ENCODE measurements at regions of chr3 and their contacts with region 1.

Region 1: GRCh38 chr3:99833617-99834205 is 16.0 kb downstream of the CMSS1 start:
- DNase-seq: no peak
- H3K4me3 ChIP-seq: no peak overlapping the region
- H3K27ac ChIP-seq: peak overlapping the region in 1 of 2 donors; percentile 41
- H3K4me1 ChIP-seq: peaks cover 0 to 7% of the 10 kb centered on the region in 2 donors
- H3K27me3 ChIP-seq: no peaks in the 10 kb centered on the region
- CTCF ChIP-seq: no peak
- POLR2A ChIP-seq: no peak

Region 2: DNA sequence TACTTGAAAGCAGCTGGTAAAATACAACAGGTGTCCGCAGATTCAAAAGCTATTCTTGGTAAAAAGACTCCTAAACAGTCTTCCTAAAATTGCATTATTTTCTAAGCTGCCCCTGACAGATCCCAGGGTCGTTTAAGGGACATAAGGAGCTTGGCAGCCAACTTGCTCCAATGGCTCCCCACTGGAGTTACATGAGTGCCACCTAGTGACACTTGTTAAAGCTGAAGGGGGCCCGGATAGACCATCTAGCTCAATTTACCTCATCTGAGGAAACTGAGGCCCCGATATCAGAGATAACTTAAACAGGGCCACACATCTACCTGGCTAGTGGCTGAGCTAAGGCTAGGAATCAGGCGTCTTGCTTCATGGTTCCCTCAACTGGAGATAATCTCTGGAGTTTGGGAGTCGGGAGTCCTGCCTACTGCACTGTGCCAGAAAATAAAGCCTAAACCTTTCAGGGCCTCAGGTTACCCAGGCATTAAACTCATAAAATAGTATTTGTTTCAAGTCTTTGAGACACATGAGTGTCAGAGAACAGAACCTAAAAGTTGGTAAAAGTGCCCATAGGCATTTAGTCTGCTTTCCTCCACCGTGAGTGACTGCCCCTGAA is 420.6 kb after region 1 on chr3:
- intact Hi-C with region 1: loop called (anchors 10 kb)
- DNase-seq: no peak
- H3K4me3 ChIP-seq: no peak overlapping the region
- H3K27ac ChIP-seq: no peak overlapping the region
- H3K4me1 ChIP-seq: no peaks in the 10 kb centered on the region
- H3K27me3 ChIP-seq: no peaks in the 10 kb centered on the region
- CTCF ChIP-seq: peak in 2 of 3 donors; percentile 50 to 56
- POLR2A ChIP-seq: no peak